MCF 10A (cell line): ENCODE measurements at regions of chr3 and their contacts with region 1.

Region 1: GRCh38 chr3:48151058-48151806 is 37.0 kb downstream of the CDC25A start:
- DNase-seq: peak; percentile 88
- H3K4me3 Mint-ChIP-seq: no peak overlapping the region
- H3K27ac Mint-ChIP-seq: no peak overlapping the region
- H3K4me1 Mint-ChIP-seq: peaks cover 23% of the 10 kb centered on the region
- H3K27me3 Mint-ChIP-seq: no peaks in the 10 kb centered on the region
- CTCF ChIP-seq: peak; percentile 92

Region 2: GRCh38 chr3:47836986-47837385 is 314.2 kb before region 1 on chr3:
- CTCF ChIA-PET with region 1: interaction called, 23 read pairs
- POLR2A ChIA-PET with region 1: no interaction called
- intact Hi-C with region 1: loop called (anchors 2 kb)
- DNase-seq: no peak
- H3K4me3 Mint-ChIP-seq: no peak overlapping the region
- H3K27ac Mint-ChIP-seq: no peak overlapping the region
- H3K4me1 Mint-ChIP-seq: no peaks in the 10 kb centered on the region
- H3K27me3 Mint-ChIP-seq: no peaks in the 10 kb centered on the region
- CTCF ChIP-seq: no peak

Region 3: GRCh38 chr3:47849699-47850563 is 301.3 kb before region 1 on chr3:
- CTCF ChIA-PET with region 1: interaction called, 16 read pairs
- POLR2A ChIA-PET with region 1: no interaction called
- intact Hi-C with region 1: loop called (anchors 5 kb)
- DNase-seq: peak; percentile 35
- H3K4me3 Mint-ChIP-seq: no peak overlapping the region
- H3K27ac Mint-ChIP-seq: peak overlapping the region; percentile 25
- H3K4me1 Mint-ChIP-seq: no peaks in the 10 kb centered on the region
- H3K27me3 Mint-ChIP-seq: no peaks in the 10 kb centered on the region
- CTCF ChIP-seq: peak; percentile 40

Region 4: GRCh38 chr3:47892286-47893040 is 258.8 kb before region 1 on chr3:
- CTCF ChIA-PET with region 1: interaction called, 11 read pairs
- POLR2A ChIA-PET with region 1: no interaction called
- intact Hi-C with region 1: no loop called
- DNase-seq: no peak
- H3K4me3 Mint-ChIP-seq: no peak overlapping the region
- H3K27ac Mint-ChIP-seq: peak overlapping the region; percentile 35
- H3K4me1 Mint-ChIP-seq: no peaks in the 10 kb centered on the region
- H3K27me3 Mint-ChIP-seq: no peaks in the 10 kb centered on the region
- CTCF ChIP-seq: no peak

Region 5: GRCh38 chr3:47989981-47990440 is 161.2 kb before region 1 on chr3:
- CTCF ChIA-PET with region 1: interaction called, 31 read pairs
- POLR2A ChIA-PET with region 1: interaction called, 3 read pairs
- intact Hi-C with region 1: loop called (anchors 1 kb)
- DNase-seq: peak; percentile 95
- H3K4me3 Mint-ChIP-seq: no peak overlapping the region
- H3K27ac Mint-ChIP-seq: peak overlapping the region; percentile 69
- H3K4me1 Mint-ChIP-seq: peaks cover 18% of the 10 kb centered on the region
- H3K27me3 Mint-ChIP-seq: no peaks in the 10 kb centered on the region
- CTCF ChIP-seq: peak; percentile 82